OCI-LY7 (cell line): ENCODE measurements at regions of chr5 and their contacts with region 1.

Region 1: DNA sequence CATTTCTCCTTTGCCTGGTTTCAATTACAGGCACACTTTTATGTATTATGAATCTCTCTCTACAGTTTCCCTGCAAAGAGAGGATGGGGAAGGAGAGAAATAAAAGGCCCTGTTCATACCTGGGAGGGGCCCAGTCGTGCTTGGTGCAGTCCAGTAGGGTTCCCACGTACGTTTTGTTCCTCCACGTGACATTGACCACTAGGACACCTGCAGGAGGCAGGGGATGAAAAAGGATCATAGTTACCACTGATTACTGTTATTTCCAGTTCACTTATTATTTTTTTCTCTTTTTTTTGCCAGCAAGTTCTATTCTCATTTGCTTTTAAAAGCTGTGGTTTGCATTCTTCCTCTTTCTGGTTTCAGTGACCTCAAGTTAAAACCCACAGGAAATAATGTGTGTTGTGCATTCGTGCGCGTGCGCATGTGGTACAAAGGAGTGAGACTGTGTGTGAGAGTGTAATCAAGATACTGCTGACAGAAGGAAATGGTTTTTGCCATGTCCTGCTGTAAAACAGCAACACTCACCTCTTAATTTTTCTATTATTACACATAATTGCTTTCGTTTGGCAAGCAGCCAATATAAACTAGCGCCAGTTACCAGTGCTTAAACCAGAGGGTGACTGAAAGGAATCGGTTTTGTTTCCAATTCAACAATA is 96.8 kb downstream of the ZNF608 start:
- DNase-seq: peak; percentile 98
- H3K4me3 ChIP-seq: peak overlapping the region; percentile 69
- H3K27ac ChIP-seq: peak overlapping the region; percentile 95
- H3K4me1 ChIP-seq: peaks cover 97% of the 10 kb centered on the region
- CTCF ChIP-seq: no peak

Region 2: DNA sequence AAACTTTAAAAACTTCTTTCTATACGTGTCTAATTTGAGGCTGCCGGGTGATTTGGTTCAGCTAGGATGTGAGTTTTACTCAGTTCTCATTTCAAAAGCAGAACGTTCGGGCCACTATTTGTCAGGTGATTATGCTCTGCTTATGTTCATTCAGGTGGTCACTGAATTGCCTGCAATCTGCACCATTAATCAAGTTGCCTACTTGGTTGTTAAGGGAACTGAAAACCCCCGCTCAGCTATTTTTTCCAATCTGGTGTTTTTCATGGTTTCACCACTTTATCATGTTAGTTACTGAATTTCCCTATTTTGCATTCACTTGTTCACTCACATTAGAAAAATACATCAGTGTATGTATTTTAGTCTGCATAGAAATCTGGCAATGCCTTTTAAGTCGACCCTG is 614.7 kb before region 1 on chr5:
- CTCF ChIA-PET with region 1: no interaction called
- POLR2A ChIA-PET with region 1: interaction called, 4 read pairs
- intact Hi-C with region 1: loop called (anchors 2 kb)
- DNase-seq: peak; percentile 90
- H3K4me3 ChIP-seq: peak overlapping the region; percentile 46
- H3K27ac ChIP-seq: peak overlapping the region; percentile 92
- H3K4me1 ChIP-seq: peaks cover 49% of the 10 kb centered on the region
- CTCF ChIP-seq: no peak

Region 3: GRCh38 chr5:124453221-124454051 is 196.2 kb before region 1 on chr5:
- CTCF ChIA-PET with region 1: no interaction called
- POLR2A ChIA-PET with region 1: interaction called, 3 read pairs
- intact Hi-C with region 1: loop called (anchors 1 kb)
- DNase-seq: peak; percentile 91
- H3K4me3 ChIP-seq: peak overlapping the region; percentile 19
- H3K27ac ChIP-seq: peak overlapping the region; percentile 86
- H3K4me1 ChIP-seq: peaks cover 63% of the 10 kb centered on the region
- CTCF ChIP-seq: 0 out of 2 replicates have a peak, but pooled peaks have one; percentile 25

Region 4: GRCh38 chr5:124536333-124536732 is 113.3 kb before region 1 on chr5:
- CTCF ChIA-PET with region 1: no interaction called
- POLR2A ChIA-PET with region 1: no interaction called
- intact Hi-C with region 1: no loop called
- DNase-seq: no peak
- H3K4me3 ChIP-seq: no peak overlapping the region
- H3K27ac ChIP-seq: no peak overlapping the region
- H3K4me1 ChIP-seq: no peaks in the 10 kb centered on the region
- CTCF ChIP-seq: no peak

Region 5: DNA sequence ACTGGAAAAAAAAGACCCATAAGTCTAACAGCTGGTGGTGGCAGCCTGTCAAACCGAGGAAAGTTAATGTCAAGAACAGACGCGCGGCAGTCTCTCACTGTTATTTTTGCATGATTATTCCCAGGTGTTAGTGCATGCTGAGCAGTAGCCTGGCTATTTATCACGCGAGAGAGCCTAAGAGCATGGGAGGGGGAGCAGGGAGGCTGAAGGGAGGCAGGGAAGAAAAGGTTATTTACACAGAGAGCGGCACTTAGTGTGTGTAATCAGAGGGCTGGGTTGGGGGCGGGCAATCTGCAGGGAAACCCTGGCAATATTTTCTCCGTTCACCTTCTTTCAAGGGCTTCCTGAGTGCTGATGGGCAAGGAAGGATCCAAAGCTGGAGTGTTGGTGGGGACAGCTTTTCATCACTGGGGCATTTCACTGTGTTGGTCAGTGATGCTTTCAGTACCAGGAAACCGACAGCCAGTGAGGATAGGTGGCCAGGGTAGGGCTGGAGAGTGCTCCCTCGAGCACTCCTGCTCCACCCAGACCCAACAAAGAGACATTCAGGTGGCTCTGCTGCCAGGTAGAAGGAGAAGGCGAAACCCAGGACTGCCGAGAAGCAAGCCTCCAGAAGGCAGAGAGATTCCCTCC is 57.2 kb after region 1 on chr5:
- CTCF ChIA-PET with region 1: no interaction called
- POLR2A ChIA-PET with region 1: interaction called, 20 read pairs
- intact Hi-C with region 1: loop called (anchors 1 kb)
- DNase-seq: peak; percentile 53
- H3K4me3 ChIP-seq: peak overlapping the region; percentile 66
- H3K27ac ChIP-seq: peak overlapping the region; percentile 95
- H3K4me1 ChIP-seq: peaks cover 95% of the 10 kb centered on the region
- CTCF ChIP-seq: no peak

Region 6: GRCh38 chr5:124741711-124742496 is 92.3 kb after region 1 on chr5:
- CTCF ChIA-PET with region 1: no interaction called
- POLR2A ChIA-PET with region 1: interaction called, 9 read pairs
- intact Hi-C with region 1: loop called (anchors 1 kb)
- DNase-seq: peak; percentile 44
- H3K4me3 ChIP-seq: peak overlapping the region; percentile 85
- H3K27ac ChIP-seq: peak overlapping the region; percentile 97
- H3K4me1 ChIP-seq: peaks cover 52% of the 10 kb centered on the region
- CTCF ChIP-seq: no peak

Region 7: GRCh38 chr5:124902097-124902821 is 252.6 kb after region 1 on chr5:
- CTCF ChIA-PET with region 1: no interaction called
- POLR2A ChIA-PET with region 1: no interaction called
- intact Hi-C with region 1: loop called (anchors 10 kb)
- DNase-seq: peak; percentile 81
- H3K4me3 ChIP-seq: peak overlapping the region; percentile 12
- H3K27ac ChIP-seq: peak overlapping the region; percentile 41
- H3K4me1 ChIP-seq: peaks cover 33% of the 10 kb centered on the region
- CTCF ChIP-seq: no peak